Aorta (tissue), 5 donors: ENCODE measurements at regions of chr9 and their contacts with region 1.

Region 1: GRCh38 chr9:68515326-68515901 is 25.3 kb downstream of the TMEM252 start:
- DNase-seq: no peak
- ATAC-seq: peak; percentile 65
- H3K4me3 ChIP-seq: no peak overlapping the region
- H3K27ac ChIP-seq: peak overlapping the region in 1 of 2 donors; percentile 66
- H3K4me1 ChIP-seq: peaks cover 0 to 2% of the 10 kb centered on the region in 2 donors
- H3K27me3 ChIP-seq: no peaks in the 10 kb centered on the region

Region 2: GRCh38 chr9:68577774-68578591 is 62.6 kb after region 1 on chr9:
- intact Hi-C with region 1: no loop called
- DNase-seq: no peak
- ATAC-seq: no peak
- H3K4me3 ChIP-seq: no peak overlapping the region
- H3K27ac ChIP-seq: no peak overlapping the region
- H3K4me1 ChIP-seq: no peaks in the 10 kb centered on the region
- H3K27me3 ChIP-seq: no peaks in the 10 kb centered on the region

Region 3: DNA sequence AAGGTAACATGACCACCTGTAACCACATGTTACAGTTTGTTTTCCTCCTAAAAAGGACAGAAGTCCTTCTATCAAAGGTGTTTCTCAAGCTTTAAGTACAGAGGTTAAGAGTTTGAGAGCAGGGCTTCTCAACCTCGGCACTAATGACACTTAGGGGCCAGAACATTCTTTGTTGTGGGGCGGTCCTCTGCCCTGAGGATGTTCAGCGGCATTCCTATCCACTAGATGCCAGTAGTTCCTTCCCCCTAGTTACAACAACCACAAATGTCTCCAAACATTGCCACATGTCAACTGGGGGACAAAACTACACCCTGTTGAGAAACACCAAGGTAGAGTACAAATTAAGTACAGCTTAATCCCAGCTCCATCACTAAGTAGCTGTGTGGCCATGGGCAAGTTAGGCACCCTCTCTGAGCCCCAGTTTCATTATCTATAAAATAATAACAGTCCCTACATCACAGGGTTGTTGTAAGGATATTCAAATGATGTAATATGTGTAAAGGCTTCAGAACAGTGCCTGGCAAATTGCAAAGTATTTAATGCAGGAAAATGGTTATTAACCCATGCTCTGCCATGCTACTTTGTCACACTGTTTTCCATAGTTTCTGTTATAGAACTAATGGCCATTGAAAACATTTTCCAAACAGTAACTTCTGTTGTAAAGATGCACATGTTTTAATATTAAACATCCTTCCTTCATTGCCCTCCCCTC is 234.3 kb after region 1 on chr9:
- intact Hi-C with region 1: no loop called
- DNase-seq: no peak
- ATAC-seq: no peak
- H3K4me3 ChIP-seq: no peak overlapping the region
- H3K27ac ChIP-seq: no peak overlapping the region
- H3K4me1 ChIP-seq: peaks cover 0 to 7% of the 10 kb centered on the region in 2 donors
- H3K27me3 ChIP-seq: no peaks in the 10 kb centered on the region

Region 4: GRCh38 chr9:69745716-69746437 is 1230.5 kb after region 1 on chr9:
- intact Hi-C with region 1: loop called in 1 of 2 experiments (anchors 5 kb)
- DNase-seq: no peak
- ATAC-seq: no peak
- H3K4me3 ChIP-seq: no peak overlapping the region
- H3K27ac ChIP-seq: no peak overlapping the region
- H3K4me1 ChIP-seq: no peaks in the 10 kb centered on the region
- H3K27me3 ChIP-seq: no peaks in the 10 kb centered on the region